ENCODE measurements at regions of chr1 and their contacts with region 1.

Region 1: DNA sequence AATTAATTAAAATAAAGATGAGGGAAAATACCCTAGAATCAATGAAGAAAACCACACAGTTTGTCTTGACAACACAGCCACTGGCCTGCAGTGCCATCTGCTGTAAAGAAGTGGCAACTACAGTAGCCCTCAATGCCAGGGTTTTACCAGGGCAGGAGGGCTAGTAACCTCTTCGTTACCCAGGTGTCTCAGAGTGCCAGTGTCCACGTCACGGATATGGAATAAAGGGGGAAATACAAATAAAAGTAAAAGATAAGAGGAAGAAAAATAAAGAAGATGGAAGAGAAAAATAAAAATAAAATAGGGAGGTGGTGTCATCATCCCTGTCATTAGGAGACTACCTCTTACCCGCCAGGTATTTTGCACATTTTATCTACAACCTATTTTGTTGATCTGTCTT is 14.2 kb upstream of the SLC44A3 start:
- DNase-seq: no peak
- H3K4me3 ChIP-seq: peak overlapping the region; percentile 17; the same call in 1 of the 2 replicates
- H3K27me3 ChIP-seq: peaks cover 3% of the 10 kb centered on the region; the same call in 1 of the 2 replicates
- CTCF ChIP-seq: peak; percentile 88

Region 2: DNA sequence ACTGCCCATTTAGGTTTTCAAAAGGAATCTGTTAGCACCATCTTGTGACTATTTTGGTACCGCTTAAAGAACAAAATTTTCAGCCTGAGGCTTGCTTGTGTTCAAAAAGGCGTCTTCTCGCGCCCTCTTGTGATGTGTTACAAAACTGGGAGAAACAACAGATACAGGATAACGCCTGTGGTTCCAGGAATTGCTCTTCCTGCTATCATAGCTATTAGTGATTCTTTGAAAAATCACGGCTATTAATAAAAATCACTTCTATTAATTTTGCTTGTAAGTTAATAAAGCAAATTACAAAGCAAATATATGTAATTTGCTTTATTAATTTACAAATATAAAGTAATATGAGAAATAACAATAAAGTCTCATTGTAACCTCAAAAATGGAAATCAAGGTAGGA is 470.0 kb before region 1 on chr1:
- CTCF ChIA-PET with region 1: interaction called, 12 read pairs
- POLR2A ChIA-PET with region 1: no interaction called
- DNase-seq: peak; percentile 54
- H3K4me3 ChIP-seq: no peak overlapping the region
- H3K27me3 ChIP-seq: peaks cover 5% of the 10 kb centered on the region; the same call in 1 of the 2 replicates
- CTCF ChIP-seq: peak; percentile 82

Region 3: GRCh38 chr1:94481473-94481933 is 324.4 kb before region 1 on chr1:
- CTCF ChIA-PET with region 1: interaction called, 102 read pairs
- POLR2A ChIA-PET with region 1: no interaction called
- DNase-seq: peak; percentile 3
- H3K4me3 ChIP-seq: no peak overlapping the region
- H3K27me3 ChIP-seq: no peaks in the 10 kb centered on the region
- CTCF ChIP-seq: peak; percentile 84

Region 4: GRCh38 chr1:94514095-94514727 is 291.7 kb before region 1 on chr1:
- CTCF ChIA-PET with region 1: interaction called, 121 read pairs
- POLR2A ChIA-PET with region 1: no interaction called
- DNase-seq: no peak
- H3K4me3 ChIP-seq: no peak overlapping the region
- H3K27me3 ChIP-seq: no peaks in the 10 kb centered on the region
- CTCF ChIP-seq: peak; percentile 78

Region 5: GRCh38 chr1:94599095-94599813 is 206.7 kb before region 1 on chr1:
- CTCF ChIA-PET with region 1: interaction called, 11 read pairs
- POLR2A ChIA-PET with region 1: no interaction called
- DNase-seq: no peak
- H3K4me3 ChIP-seq: no peak overlapping the region
- H3K27me3 ChIP-seq: no peaks in the 10 kb centered on the region; the same call in 1 of the 2 replicates
- CTCF ChIP-seq: peak; percentile 46

Region 6: GRCh38 chr1:95043141-95043980 is 237.4 kb after region 1 on chr1:
- CTCF ChIA-PET with region 1: interaction called, 24 read pairs
- POLR2A ChIA-PET with region 1: no interaction called
- DNase-seq: no peak
- H3K4me3 ChIP-seq: no peak overlapping the region
- H3K27me3 ChIP-seq: no peaks in the 10 kb centered on the region
- CTCF ChIP-seq: peak; percentile 97